ENCODE measurements at regions of chr2 and their contacts with region 1.

Region 1: GRCh38 chr2:40374543-40375240 is 77.2 kb downstream of the SLC8A1 start:
- DNase-seq: no peak
- H3K4me3 ChIP-seq: no peak overlapping the region
- H3K27ac ChIP-seq: no peak overlapping the region
- H3K4me1 ChIP-seq: peaks cover 3 to 14% of the 10 kb centered on the region in 2 donors
- H3K27me3 ChIP-seq: no peaks in the 10 kb centered on the region
- CTCF ChIP-seq: no peak

Region 2: GRCh38 chr2:40325116-40325515 is 49.6 kb before region 1 on chr2:
- intact Hi-C with region 1: loop called (anchors 5 kb)
- DNase-seq: no peak
- H3K4me3 ChIP-seq: no peak overlapping the region
- H3K27ac ChIP-seq: no peak overlapping the region
- H3K4me1 ChIP-seq: peaks cover 0 to 4% of the 10 kb centered on the region in 2 donors
- H3K27me3 ChIP-seq: no peaks in the 10 kb centered on the region
- CTCF ChIP-seq: no peak

Measured in ascending aorta (tissue), 2 donors.